Dorsolateral prefrontal cortex (tissue), 120 donors: ENCODE measurements at regions of chr2 and their contacts with region 1.

Region 1: DNA sequence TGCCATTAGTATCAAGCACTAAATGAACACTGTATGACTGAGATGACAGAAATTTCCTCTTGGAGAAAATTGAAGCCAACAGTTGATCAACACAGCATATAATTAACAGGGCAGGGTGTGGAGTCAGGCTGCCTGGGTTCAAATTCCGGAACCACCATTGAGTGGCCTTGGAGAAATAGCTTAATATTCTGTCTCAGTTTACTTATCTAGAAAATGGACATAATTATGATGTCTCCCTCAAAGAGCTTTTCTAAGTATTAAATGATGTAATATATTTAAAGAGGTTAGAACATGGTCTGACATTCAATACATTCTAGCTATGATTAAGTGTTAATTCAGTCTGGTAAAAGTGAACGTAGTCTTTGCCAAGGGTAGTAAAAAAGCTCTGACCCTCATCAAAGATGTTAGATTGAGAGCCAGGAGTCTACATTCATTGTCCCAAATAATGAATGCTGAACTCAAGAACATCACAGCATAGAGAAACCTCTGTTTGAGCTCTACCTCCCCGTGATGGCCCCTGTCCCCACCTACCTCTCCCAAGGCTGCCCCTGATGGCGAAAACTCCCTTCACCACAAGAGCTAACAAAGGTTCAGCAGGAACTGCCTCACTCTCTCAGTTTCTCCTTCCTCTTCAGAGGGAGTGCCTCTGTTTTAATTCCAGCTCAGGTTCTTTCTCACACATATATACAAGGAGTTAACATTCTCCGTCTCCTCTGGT is 2.7 kb upstream of the VWA3B start:
- DNase-seq: no peak
- H3K4me3 ChIP-seq: no peak overlapping the region
- H3K27ac ChIP-seq: no peak overlapping the region
- H3K27me3 ChIP-seq: peaks cover 0 to 16% (median 0%) of the 10 kb centered on the region in 45 donors
- CTCF ChIP-seq: no peak

Region 2: DNA sequence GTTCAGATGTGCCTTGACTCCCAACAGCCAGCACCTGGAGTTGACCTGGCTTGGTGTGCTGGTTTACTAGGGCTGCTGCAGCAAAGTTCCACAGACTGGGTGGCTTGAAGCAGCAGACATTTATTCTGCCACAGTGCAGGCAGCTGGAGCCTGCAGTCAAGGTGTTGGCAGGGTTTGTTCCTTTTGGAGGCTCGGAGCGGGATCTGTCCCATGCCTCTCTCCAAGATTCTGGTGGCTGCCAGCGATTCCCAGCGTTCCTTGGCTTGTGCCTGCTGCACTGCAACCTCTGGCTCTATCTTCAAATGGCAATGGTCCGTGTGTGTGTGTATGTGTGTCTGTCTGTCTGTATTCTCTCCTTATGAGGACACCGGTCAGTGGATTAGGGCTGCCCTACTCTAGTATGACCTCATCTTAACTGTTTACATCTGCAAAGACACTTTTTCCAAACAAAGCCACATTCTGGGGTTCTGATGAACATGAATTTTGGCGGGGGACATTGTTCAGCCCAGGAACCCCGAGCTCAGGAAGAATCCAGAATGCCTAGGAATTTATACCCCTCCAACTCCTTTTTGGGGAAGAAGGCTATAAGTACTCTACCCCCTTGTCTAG is 43.9 kb before region 1 on chr2:
- intact Hi-C with region 1: loop called in 1 of 2 experiments (anchors 5 kb)
- DNase-seq: no peak
- H3K4me3 ChIP-seq: no peak overlapping the region
- H3K27ac ChIP-seq: no peak overlapping the region
- H3K27me3 ChIP-seq: peaks cover 0 to 2% (median 0%) of the 10 kb centered on the region in 45 donors
- CTCF ChIP-seq: no peak

Region 3: GRCh38 chr2:98063291-98063854 is 20.9 kb before region 1 on chr2:
- intact Hi-C with region 1: no loop called
- DNase-seq: no peak
- H3K4me3 ChIP-seq: no peak overlapping the region
- H3K27ac ChIP-seq: no peak overlapping the region
- H3K27me3 ChIP-seq: no peaks in the 10 kb centered on the region
- CTCF ChIP-seq: no peak

Region 4: DNA sequence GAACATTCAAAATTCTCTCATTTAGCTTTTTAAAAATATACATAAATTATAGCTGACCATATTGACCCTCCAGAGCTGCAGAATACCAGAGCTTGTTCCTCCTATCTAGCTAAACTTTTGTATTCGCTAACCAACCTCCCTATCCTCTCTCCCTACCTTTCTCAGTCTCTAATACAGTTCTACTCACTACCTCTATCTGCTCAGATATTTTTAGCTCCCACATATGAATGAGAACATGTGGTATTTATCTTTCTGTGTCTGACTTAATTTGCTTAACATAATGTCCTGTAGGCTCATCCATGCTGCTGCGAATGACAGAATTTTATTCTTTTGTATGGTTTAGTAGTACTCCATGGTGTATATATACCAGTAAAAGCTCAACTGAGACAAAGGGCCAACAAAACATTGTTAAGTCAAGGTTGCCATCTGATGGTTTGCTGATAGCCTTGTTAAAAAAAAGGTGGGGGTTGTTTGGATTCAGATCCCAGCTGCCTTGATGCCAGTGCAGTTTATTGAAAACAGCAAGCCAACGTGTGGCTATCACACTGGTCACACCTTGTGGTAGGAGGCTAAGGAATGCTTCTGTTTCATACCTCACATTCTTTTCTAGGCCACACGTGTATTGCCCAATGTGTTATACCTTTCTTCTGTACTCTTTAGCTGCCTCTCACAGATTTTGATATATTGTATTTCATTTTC is 104.2 kb after region 1 on chr2:
- intact Hi-C with region 1: no loop called
- DNase-seq: no peak
- H3K4me3 ChIP-seq: no peak overlapping the region
- H3K27ac ChIP-seq: no peak overlapping the region
- H3K27me3 ChIP-seq: no peaks in the 10 kb centered on the region
- CTCF ChIP-seq: no peak